K562 (cell line): ENCODE measurements at regions of chr1 and their contacts with region 1.

Region 1: DNA sequence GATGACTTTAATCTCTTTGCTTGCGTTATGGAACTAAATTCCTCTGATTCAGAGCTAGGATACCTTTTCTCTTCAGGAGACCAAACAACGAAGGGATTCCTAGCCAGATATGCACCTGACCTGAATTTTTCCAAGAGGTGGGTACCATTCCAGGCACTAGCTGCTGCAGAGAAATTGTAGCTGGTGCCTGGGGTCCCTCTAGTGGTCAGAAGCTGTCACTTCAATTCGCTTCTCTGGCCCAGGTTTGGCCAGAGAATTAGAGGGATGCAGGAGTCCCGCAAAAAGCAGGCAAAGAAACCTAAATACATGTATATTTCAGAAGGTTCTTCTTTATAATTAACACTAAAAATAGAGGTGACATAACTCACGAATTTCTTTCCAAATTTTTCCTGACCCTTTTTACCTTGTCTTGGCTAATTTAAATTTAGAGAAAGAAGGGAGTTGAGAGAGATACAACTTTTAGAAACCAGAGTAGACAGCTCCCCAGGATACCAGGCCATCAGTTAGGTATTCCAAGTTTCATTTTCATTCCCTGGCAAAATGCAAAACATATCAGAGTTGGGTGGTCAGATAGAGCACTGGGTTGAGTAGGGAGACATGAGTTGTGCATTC is 9.6 kb downstream of the ACKR1 start:
- DNase-seq: peak; percentile 49 to 72 (median 66)
- ATAC-seq: peak; percentile 84
- H3K4me3 ChIP-seq: no peak overlapping the region
- H3K27ac ChIP-seq: no peak overlapping the region
- H3K4me1 ChIP-seq: no peaks in the 10 kb centered on the region; a peak in 1 of 5 replicates
- H3K27me3 ChIP-seq: peaks cover 4 to 12% of the 10 kb centered on the region in 2 experiments; a peak in 2 of 5 replicates
- CTCF ChIP-seq: peak; percentile 82 to 87 (median 85)
- EP300 ChIP-seq: no peak
- POLR2A ChIP-seq: no peak
- RAD21 ChIP-seq: peak; percentile 66 to 77

Region 2: DNA sequence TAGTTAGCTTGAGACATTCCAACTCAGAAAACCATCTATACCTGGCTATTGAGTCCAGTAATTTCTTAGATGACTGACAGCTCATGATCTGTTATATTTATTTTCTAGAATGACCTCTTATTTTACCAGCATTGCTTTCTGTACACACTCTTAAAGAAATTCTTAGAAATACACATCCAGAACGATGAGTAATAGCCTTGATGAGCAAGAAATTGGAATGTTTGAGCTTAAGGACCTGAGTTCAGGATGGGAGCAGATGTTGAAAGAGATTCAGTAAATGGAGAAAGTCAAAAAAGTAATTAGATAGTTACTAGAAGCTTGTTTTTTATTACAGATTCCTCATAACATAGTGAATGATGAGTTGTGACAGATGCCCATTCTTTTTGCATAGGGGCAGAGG is 271.2 kb before region 1 on chr1:
- CTCF ChIA-PET with region 1: no interaction called
- POLR2A ChIA-PET with region 1: no interaction called
- in situ Hi-C with region 1: no loop called
- intact Hi-C with region 1: no loop called
- DNase-seq: no peak
- ATAC-seq: no peak
- H3K4me3 ChIP-seq: no peak overlapping the region
- H3K27ac ChIP-seq: no peak overlapping the region
- H3K4me1 ChIP-seq: no peaks in the 10 kb centered on the region
- H3K27me3 ChIP-seq: no peaks in the 10 kb centered on the region
- CTCF ChIP-seq: no peak
- EP300 ChIP-seq: no peak
- POLR2A ChIP-seq: no peak
- RAD21 ChIP-seq: no peak

Region 3: GRCh38 chr1:159132271-159132881 is 81.9 kb before region 1 on chr1:
- CTCF ChIA-PET with region 1: interaction called, 20 read pairs
- POLR2A ChIA-PET with region 1: interaction called, 4 read pairs
- in situ Hi-C with region 1: loop called (anchors 10 kb)
- intact Hi-C with region 1: loop called (anchors 1 kb)
- DNase-seq: peak; percentile 64 to 73 (median 66)
- ATAC-seq: peak; percentile 79
- H3K4me3 ChIP-seq: no peak overlapping the region
- H3K27ac ChIP-seq: no peak overlapping the region
- H3K4me1 ChIP-seq: no peaks in the 10 kb centered on the region
- H3K27me3 ChIP-seq: peaks cover 0 to 7% of the 10 kb centered on the region in 2 experiments; a peak in 2 of 5 replicates
- CTCF ChIP-seq: peak; percentile 73 to 89 (median 83)
- EP300 ChIP-seq: no peak
- POLR2A ChIP-seq: no peak
- RAD21 ChIP-seq: peak; percentile 74 to 77

Region 4: DNA sequence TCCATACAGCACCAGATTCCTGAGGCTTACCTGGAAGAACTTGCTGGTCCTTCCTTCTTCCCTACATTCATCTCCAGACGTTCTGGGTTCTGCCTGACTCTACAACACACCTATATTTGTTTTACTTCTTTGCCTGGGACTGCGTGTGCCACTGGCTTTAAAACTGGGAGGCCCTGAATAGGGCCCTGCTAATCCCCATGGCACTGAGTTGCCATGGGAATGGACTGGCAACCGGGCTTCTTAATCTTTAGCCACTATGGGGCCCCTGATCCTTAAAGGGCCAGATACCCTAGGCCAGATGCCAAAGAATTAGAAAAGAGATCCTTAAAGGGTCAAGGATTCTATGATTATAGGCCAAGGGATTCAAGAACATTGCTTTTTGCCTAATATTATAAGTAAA is 67.3 kb before region 1 on chr1:
- CTCF ChIA-PET with region 1: no interaction called
- POLR2A ChIA-PET with region 1: no interaction called
- in situ Hi-C with region 1: no loop called
- intact Hi-C with region 1: no loop called
- DNase-seq: no peak
- ATAC-seq: no peak
- H3K4me3 ChIP-seq: no peak overlapping the region
- H3K27ac ChIP-seq: no peak overlapping the region
- H3K4me1 ChIP-seq: no peaks in the 10 kb centered on the region
- H3K27me3 ChIP-seq: no peaks in the 10 kb centered on the region; a peak in 1 of 5 replicates
- CTCF ChIP-seq: no peak
- EP300 ChIP-seq: no peak
- POLR2A ChIP-seq: no peak
- RAD21 ChIP-seq: no peak

Region 5: DNA sequence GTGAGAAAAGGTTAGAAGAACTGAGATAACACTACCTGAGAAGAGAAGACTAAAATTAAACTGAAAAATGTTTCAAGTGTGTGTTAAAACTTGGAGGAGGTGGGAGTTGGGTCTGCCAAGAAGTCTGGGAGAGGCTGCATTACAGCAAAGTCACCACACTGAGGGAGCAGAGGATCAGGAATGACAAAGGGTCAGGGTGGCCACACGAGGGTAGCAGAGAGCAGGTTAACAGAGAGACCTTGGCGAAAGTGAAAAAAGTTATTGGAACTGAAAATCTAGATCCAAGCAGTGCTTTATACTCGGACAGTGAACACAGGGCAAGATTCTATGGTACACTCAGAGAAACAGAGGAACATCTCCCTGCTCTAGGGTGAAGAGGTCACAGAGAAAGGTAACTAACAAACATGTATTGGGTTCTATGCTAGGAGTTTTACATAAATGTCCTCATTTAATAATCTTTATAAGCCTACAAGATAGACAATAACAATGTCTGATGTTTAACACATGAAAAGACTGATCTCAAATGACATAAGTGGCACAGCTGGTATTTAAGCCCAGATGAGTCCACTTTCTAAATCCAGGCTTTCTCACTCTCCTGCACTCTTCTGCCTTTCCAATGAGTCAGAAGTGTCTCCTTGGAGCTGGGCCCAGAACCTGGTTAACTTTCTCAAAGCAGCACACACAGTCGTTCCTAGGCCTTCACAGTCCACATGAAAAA is 53.1 kb before region 1 on chr1:
- CTCF ChIA-PET with region 1: interaction called, 90 read pairs
- POLR2A ChIA-PET with region 1: no interaction called
- in situ Hi-C with region 1: loop called (anchors 5 kb)
- intact Hi-C with region 1: loop called (anchors 1 kb)
- DNase-seq: peak; percentile 73 to 78 (median 75)
- ATAC-seq: peak; percentile 98
- H3K4me3 ChIP-seq: no peak overlapping the region
- H3K27ac ChIP-seq: no peak overlapping the region
- H3K4me1 ChIP-seq: no peaks in the 10 kb centered on the region
- H3K27me3 ChIP-seq: peaks cover 0 to 4% of the 10 kb centered on the region in 2 experiments; a peak in 3 of 5 replicates
- CTCF ChIP-seq: peak; percentile 99 to 100 (median 100)
- EP300 ChIP-seq: no peak
- POLR2A ChIP-seq: no peak
- RAD21 ChIP-seq: peak; percentile 100

Region 6: GRCh38 chr1:159798893-159799292 is 584.6 kb after region 1 on chr1:
- CTCF ChIA-PET with region 1: no interaction called
- POLR2A ChIA-PET with region 1: no interaction called
- in situ Hi-C with region 1: no loop called
- intact Hi-C with region 1: loop called (anchors 10 kb)
- DNase-seq: peak; percentile 66 to 67 (median 66)
- ATAC-seq: peak; percentile 94
- H3K4me3 ChIP-seq: no peak overlapping the region
- H3K27ac ChIP-seq: no peak overlapping the region
- H3K4me1 ChIP-seq: no peaks in the 10 kb centered on the region
- H3K27me3 ChIP-seq: peaks cover 27 to 37% of the 10 kb centered on the region in 2 experiments
- CTCF ChIP-seq: peak; percentile 75 to 87 (median 76)
- EP300 ChIP-seq: no peak
- POLR2A ChIP-seq: no peak
- RAD21 ChIP-seq: peak; percentile 75 to 89